ENCODE measurements at regions of chrX and their contacts with region 1.

Region 1: GRCh38 chrX:88613338-88613737 is 133.7 kb upstream of the CPXCR1 start:
- DNase-seq: no peak
- H3K4me3 ChIP-seq: no peak overlapping the region
- H3K27ac ChIP-seq: no peak overlapping the region
- H3K4me1 ChIP-seq: no peaks in the 10 kb centered on the region
- H3K27me3 ChIP-seq: no peaks in the 10 kb centered on the region
- CTCF ChIP-seq: peak; percentile 60

Region 2: GRCh38 chrX:88135735-88136134 is 477.6 kb before region 1 on chrX:
- CTCF ChIA-PET with region 1: no interaction called
- POLR2A ChIA-PET with region 1: no interaction called
- intact Hi-C with region 1: loop called (anchors 2 kb)
- DNase-seq: no peak
- H3K4me3 ChIP-seq: no peak overlapping the region
- H3K27ac ChIP-seq: no peak overlapping the region
- H3K4me1 ChIP-seq: no peaks in the 10 kb centered on the region
- H3K27me3 ChIP-seq: no peaks in the 10 kb centered on the region
- CTCF ChIP-seq: peak; percentile 56

Region 3: GRCh38 chrX:88672261-88672660 is 58.9 kb after region 1 on chrX:
- CTCF ChIA-PET with region 1: no interaction called
- POLR2A ChIA-PET with region 1: no interaction called
- intact Hi-C with region 1: no loop called
- DNase-seq: no peak
- H3K4me3 ChIP-seq: no peak overlapping the region
- H3K27ac ChIP-seq: no peak overlapping the region
- H3K4me1 ChIP-seq: no peaks in the 10 kb centered on the region
- H3K27me3 ChIP-seq: no peaks in the 10 kb centered on the region
- CTCF ChIP-seq: no peak

Measured in PC-9 (cell line).